Esophagus squamous epithelium (tissue), 5 donors: ENCODE measurements at regions of chr18 and their contacts with region 1.

Region 1: GRCh38 chr18:63320046-63320689 is 599 bp upstream of the BCL2 start:
- DNase-seq: peak; percentile 49
- H3K4me3 ChIP-seq: peak overlapping the region; percentile 59 to 75 (median 72)
- H3K27ac ChIP-seq: peak overlapping the region; percentile 78 to 90 (median 86)
- H3K4me1 ChIP-seq: peaks cover 11 to 54% (median 11%) of the 10 kb centered on the region in 3 donors
- H3K27me3 ChIP-seq: no peaks in the 10 kb centered on the region
- CTCF ChIP-seq: no peak
- POLR2A ChIP-seq: peak in 1 of 4 donors; percentile 13

Region 2: GRCh38 chr18:63016270-63016669 is 303.9 kb before region 1 on chr18:
- intact Hi-C with region 1: loop called (anchors 5 kb)
- DNase-seq: no peak
- H3K4me3 ChIP-seq: no peak overlapping the region
- H3K27ac ChIP-seq: no peak overlapping the region
- H3K4me1 ChIP-seq: no peaks in the 10 kb centered on the region
- H3K27me3 ChIP-seq: peaks cover 0 to 21% (median 0%) of the 10 kb centered on the region in 4 donors
- CTCF ChIP-seq: peak; percentile 63 to 84 (median 79)
- POLR2A ChIP-seq: no peak

Region 3: GRCh38 chr18:63131106-63131958 is 188.8 kb before region 1 on chr18:
- intact Hi-C with region 1: loop called (anchors 5 kb)
- DNase-seq: no peak
- H3K4me3 ChIP-seq: no peak overlapping the region
- H3K27ac ChIP-seq: peak overlapping the region in 3 of 4 donors; percentile 15 to 71 (median 56)
- H3K4me1 ChIP-seq: peaks cover 8 to 26% (median 17%) of the 10 kb centered on the region in 3 donors
- H3K27me3 ChIP-seq: no peaks in the 10 kb centered on the region
- CTCF ChIP-seq: peak in 5 of 6 experiments; percentile 50 to 74 (median 67)
- POLR2A ChIP-seq: no peak

Region 4: DNA sequence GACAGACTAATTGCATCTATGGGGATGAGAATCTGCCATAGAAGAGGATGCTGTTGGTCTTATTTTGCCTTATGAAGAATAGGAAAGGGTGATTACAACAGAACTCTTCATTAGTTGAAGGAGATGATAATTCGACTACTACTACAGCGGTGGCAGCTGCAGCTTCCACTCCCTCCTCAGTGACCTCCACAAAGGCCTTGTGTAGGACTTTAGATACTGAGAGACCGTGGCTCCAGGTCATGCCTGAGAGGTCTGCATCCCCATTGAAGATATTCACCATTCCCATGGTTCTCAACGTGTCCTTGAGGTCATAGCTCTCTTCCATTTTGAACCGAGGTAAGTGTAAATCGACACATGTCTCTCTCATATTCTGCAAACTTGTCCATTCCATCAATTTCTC is 317.5 kb after region 1 on chr18:
- intact Hi-C with region 1: no loop called
- DNase-seq: no peak
- H3K4me3 ChIP-seq: no peak overlapping the region
- H3K27ac ChIP-seq: no peak overlapping the region
- H3K4me1 ChIP-seq: no peaks in the 10 kb centered on the region
- H3K27me3 ChIP-seq: no peaks in the 10 kb centered on the region
- CTCF ChIP-seq: no peak
- POLR2A ChIP-seq: no peak